ENCODE measurements at regions of chr5 and their contacts with region 1.

Region 1: DNA sequence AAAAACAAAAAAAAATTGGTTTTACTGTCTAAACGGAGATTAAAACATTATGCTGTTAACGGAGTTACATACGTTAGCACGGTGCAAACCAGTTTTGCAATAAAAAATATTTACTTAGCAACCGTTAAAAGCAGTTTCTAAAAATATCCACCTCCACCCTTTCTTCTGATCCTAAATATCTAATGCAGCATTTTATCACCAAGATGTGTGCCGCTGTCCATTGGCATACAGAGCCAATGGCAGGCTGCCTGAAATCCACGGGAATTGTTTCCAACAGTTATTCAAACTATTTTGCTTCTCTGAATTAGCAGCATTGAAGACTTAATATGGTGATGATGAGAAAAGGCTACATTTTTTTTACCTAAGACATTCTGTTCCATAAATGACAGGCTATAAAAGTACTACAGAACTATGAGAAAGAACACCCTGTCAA is 61.6 kb downstream of the CSNK1A1 start:
- DNase-seq: peak in 1 of 2 donors; percentile 77
- H3K4me3 ChIP-seq: no peak overlapping the region
- H3K27ac ChIP-seq: peak overlapping the region; percentile 97 to 98
- H3K4me1 ChIP-seq: peaks cover 11 to 40% of the 10 kb centered on the region in 2 donors
- H3K27me3 ChIP-seq: no peaks in the 10 kb centered on the region
- CTCF ChIP-seq: no peak
- POLR2A ChIP-seq: no peak

Region 2: DNA sequence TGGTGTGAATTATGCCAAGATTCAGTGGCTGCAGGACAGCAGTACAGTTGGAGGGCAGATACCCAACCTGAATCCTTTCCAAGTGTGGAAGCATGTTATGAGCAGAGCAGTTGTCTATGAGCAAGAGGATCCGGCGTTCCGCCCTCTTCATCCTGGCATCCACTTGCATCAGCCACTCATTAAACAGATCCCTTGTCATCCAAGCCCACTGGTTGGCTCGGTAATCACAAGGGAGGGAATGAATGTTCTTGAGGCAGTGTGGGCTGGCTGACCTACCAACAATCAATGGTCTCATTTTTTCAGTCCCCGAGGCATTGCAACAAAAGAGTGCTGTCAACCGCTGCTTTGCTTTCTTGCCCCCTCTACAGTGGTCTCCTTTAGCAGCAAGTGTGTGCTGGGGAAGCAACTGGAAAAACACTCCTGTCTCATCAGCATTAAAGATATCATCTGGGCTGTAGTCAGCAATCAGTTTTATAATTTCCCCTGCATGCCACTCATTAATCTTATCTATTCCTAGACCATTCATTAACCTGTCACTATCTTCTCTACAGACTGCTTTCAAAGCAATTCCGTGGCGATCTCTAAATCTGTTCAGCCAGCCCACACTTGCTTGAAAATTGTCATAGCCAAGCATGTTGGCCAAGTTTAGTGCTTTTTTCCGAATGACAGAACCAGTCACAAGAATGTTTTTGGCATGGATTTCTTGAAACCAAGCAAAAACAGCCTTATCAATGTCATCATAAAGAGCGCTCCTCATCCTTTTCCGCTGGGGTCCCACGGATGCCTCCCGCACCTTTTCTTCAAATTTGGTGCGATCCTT is 506.0 kb after region 1 on chr5:
- intact Hi-C with region 1: loop called (anchors 5 kb)
- DNase-seq: no peak
- H3K4me3 ChIP-seq: peak overlapping the region in 2 of 3 donors; percentile 17 to 43
- H3K27ac ChIP-seq: peak overlapping the region; percentile 65 to 79
- H3K4me1 ChIP-seq: peaks cover 2 to 5% of the 10 kb centered on the region in 2 donors
- H3K27me3 ChIP-seq: no peaks in the 10 kb centered on the region
- CTCF ChIP-seq: no peak
- POLR2A ChIP-seq: no peak